Activated CD4-positive, alpha-beta T cell treated with anti-CD3 and anti-CD28 coated beads for 36 hours (primary cell): ENCODE measurements at regions of chr6 and their contacts with region 1.

Region 1: GRCh38 chr6:147285087-147285855 is 81.1 kb downstream of the STXBP5 start:
- DNase-seq: no peak
- ATAC-seq: peak; percentile 33
- H3K4me3 Mint-ChIP-seq: no peak overlapping the region
- H3K27ac Mint-ChIP-seq: peak overlapping the region; percentile 7
- H3K4me1 Mint-ChIP-seq: peaks cover 38% of the 10 kb centered on the region
- H3K27me3 Mint-ChIP-seq: no peaks in the 10 kb centered on the region

Region 2: GRCh38 chr6:146526192-146526591 is 759.1 kb before region 1 on chr6:
- CTCF ChIA-PET with region 1: no interaction called
- POLR2A ChIA-PET with region 1: no interaction called
- intact Hi-C with region 1: no loop called
- DNase-seq: no peak
- ATAC-seq: no peak
- H3K4me3 Mint-ChIP-seq: no peak overlapping the region
- H3K27ac Mint-ChIP-seq: no peak overlapping the region
- H3K4me1 Mint-ChIP-seq: no peaks in the 10 kb centered on the region
- H3K27me3 Mint-ChIP-seq: no peaks in the 10 kb centered on the region

Region 3: GRCh38 chr6:147238164-147238563 is 47.1 kb before region 1 on chr6:
- CTCF ChIA-PET with region 1: no interaction called
- POLR2A ChIA-PET with region 1: no interaction called
- intact Hi-C with region 1: no loop called
- DNase-seq: no peak
- ATAC-seq: no peak
- H3K4me3 Mint-ChIP-seq: no peak overlapping the region
- H3K27ac Mint-ChIP-seq: no peak overlapping the region
- H3K4me1 Mint-ChIP-seq: no peaks in the 10 kb centered on the region
- H3K27me3 Mint-ChIP-seq: no peaks in the 10 kb centered on the region

Region 4: GRCh38 chr6:147268254-147268653 is 17.0 kb before region 1 on chr6:
- CTCF ChIA-PET with region 1: interaction called, 3 read pairs
- POLR2A ChIA-PET with region 1: interaction called, 3 read pairs
- intact Hi-C with region 1: loop called (anchors 1 kb)
- DNase-seq: no peak
- ATAC-seq: peak; percentile 92
- H3K4me3 Mint-ChIP-seq: no peak overlapping the region
- H3K27ac Mint-ChIP-seq: peak overlapping the region; percentile 79
- H3K4me1 Mint-ChIP-seq: peaks cover 17% of the 10 kb centered on the region
- H3K27me3 Mint-ChIP-seq: no peaks in the 10 kb centered on the region

Region 5: DNA sequence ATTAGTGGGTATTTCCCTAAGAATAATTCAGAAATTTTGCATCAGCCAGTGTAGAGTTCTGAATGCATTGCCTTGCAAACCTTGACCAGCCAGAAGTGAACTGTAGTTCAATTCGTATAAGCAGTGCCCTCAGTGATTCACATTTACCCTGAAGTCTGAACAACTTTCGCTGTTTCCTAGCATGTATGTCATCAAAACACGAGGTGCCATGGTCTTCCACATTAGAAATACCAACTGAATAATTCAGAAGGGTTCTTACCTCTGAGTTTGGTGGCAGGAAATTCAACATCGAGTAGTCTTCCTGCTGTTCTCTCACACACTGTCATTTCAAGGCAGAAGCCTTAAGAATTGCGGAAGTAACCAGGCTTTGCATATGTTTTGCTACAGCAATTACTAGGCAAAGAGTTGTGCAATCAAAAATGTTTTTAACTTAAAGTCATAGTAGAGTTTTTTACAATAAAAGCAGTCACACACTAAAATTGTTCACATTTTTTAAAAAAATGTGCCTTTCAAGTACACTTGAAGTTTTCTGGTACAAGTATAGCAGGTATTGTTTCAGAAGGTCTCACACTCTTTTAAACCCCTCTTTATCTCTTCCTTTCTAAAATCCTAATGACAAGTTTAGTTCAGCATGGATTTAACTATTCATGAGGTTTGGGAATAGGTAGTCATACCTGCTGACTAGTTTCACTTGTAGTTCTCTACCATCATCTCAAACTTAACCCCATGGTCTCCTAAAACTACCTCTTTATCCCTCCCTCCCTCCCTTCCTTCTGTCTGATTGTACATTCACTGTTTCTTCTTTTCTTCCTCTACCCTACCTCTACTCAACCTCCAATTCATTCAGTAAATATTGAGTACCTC is 37.3 kb after region 1 on chr6:
- CTCF ChIA-PET with region 1: no interaction called
- POLR2A ChIA-PET with region 1: no interaction called
- intact Hi-C with region 1: loop called in 1 of 2 experiments (anchors 1 kb)
- DNase-seq: peak; percentile 32
- ATAC-seq: peak; percentile 94
- H3K4me3 Mint-ChIP-seq: peak overlapping the region; percentile 51
- H3K27ac Mint-ChIP-seq: peak overlapping the region; percentile 91
- H3K4me1 Mint-ChIP-seq: peaks cover 19% of the 10 kb centered on the region
- H3K27me3 Mint-ChIP-seq: no peaks in the 10 kb centered on the region